HCT116 (cell line): ENCODE measurements at regions of chrX and their contacts with region 1.

Region 1: DNA sequence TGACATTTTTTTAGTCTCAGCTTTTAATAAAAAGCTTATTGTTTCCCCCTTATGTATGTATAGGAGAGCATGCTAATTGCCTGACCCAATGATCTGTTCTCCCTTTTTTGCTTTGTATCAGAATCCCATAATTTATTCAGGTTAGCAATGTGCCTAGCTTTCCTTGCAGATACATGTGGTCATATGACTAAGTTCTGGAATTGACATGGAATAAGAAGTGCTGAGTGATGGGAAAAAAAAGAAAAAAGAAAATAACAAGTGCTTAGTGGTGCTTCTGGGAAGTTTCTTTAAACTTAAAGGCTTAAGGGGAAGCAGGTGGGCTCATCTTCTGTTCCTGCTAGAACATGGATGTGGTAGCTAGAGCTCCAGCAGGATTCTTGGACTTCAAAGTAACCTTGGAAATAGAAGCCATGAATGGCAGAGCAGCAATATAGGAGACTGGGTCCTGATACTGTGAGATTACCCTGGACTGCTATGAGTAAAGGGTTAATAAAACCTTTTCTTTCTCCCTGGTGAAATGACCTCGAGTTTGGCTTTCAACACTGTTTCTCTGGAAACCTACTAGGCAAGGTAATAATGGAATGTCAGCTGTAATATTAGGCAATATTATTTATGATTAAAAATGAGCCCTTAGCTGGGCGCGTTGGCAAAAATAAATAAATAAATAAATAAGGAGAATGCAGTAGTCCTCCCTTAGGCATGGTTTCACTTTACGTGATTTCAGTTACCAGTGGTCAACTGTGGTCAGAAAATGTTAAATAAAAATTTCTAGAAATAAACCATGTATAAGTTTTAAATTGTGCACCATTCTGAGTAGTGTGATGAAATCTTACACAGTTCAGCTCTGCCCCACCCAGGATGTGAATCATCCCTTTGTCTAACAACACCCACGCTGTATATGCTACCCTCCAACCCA is 16.7 kb upstream of the RBM41 start:
- DNase-seq: peak; percentile 78
- ATAC-seq: peak; percentile 91
- H3K4me3 ChIP-seq: peak overlapping the region; percentile 13 to 47
- H3K27ac ChIP-seq: peak overlapping the region; percentile 90
- H3K4me1 ChIP-seq: peaks cover 21 to 37% of the 10 kb centered on the region in 2 experiments
- H3K27me3 ChIP-seq: no peaks in the 10 kb centered on the region
- CTCF ChIP-seq: no peak
- POLR2A ChIP-seq: no peak
- RAD21 ChIP-seq: no peak

Region 2: DNA sequence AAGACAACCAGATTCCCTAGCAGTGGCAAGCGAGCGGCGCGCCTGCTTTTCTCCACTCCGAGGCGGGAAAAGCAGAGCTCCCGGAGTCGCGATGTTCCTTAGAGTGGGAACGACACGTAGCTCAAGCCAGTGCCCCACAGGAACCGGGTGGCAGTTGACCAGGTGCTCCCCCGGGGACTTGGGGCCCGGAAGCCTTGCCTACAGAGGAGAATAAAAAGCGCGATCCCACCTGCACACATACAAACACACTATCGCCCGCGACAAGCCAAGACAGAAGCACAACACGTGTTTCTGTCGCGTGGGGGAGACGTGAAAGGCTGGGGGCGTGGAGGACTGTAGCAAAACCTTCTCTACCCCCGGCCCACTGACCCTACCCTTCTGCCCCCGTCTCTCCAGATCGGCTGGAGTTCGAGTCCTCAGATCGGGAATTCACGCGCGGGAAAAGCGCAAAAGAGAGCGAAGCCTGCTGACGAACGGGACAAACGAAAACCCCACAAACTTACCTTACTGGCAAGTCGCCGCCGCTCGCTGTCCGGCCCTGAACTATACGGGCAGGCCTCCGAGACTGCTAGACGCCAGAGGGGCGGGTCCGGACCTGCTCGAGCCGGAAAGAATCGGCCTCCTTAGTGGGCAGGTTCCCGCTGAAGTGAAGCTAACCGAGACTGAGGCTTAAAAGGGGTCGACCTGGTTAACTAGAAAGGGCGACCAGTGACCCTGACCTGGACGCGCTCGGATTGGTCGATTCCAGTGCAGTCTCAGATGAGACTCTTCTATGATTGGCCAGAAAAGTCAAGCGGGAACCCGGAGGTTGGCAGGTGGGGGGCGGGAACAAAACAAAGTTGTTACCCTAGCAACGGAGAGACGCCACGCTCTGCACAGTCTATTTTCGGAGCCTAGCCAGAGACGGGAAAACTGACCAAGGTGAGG is 70.7 kb after region 1 on chrX and contains the starts of genes DNAAF6 and NUP62CL:
- CTCF ChIA-PET with region 1: no interaction called
- POLR2A ChIA-PET with region 1: no interaction called
- RAD21 ChIA-PET with region 1: no interaction called
- intact Hi-C with region 1: loop called (anchors 10 kb)
- DNase-seq: peak; percentile 80
- ATAC-seq: peak; percentile 95
- H3K4me3 ChIP-seq: peak within 1 kb of the TSS; percentile 66 to 71
- H3K27ac ChIP-seq: peak within 1 kb of the TSS; percentile 65
- H3K4me1 ChIP-seq: peaks cover 0 to 13% of the 10 kb centered on the region in 2 experiments; a peak in 3 of 4 replicates
- H3K27me3 ChIP-seq: no peaks in the 10 kb centered on the region
- CTCF ChIP-seq: no peak
- POLR2A ChIP-seq: no peak
- RAD21 ChIP-seq: no peak
- total RNA-seq, gene DNAAF6: not detected
- total RNA-seq, gene NUP62CL: 21.1 TPM

Region 3: GRCh38 chrX:107551546-107551945 is 416.2 kb after region 1 on chrX:
- CTCF ChIA-PET with region 1: no interaction called
- POLR2A ChIA-PET with region 1: no interaction called
- RAD21 ChIA-PET with region 1: no interaction called
- intact Hi-C with region 1: no loop called
- DNase-seq: no peak
- ATAC-seq: no peak
- H3K4me3 ChIP-seq: no peak overlapping the region
- H3K27ac ChIP-seq: no peak overlapping the region
- H3K4me1 ChIP-seq: no peaks in the 10 kb centered on the region
- H3K27me3 ChIP-seq: no peaks in the 10 kb centered on the region
- CTCF ChIP-seq: no peak
- POLR2A ChIP-seq: no peak
- RAD21 ChIP-seq: no peak